ENCODE measurements at regions of chr20 and their contacts with region 1.

Region 1: DNA sequence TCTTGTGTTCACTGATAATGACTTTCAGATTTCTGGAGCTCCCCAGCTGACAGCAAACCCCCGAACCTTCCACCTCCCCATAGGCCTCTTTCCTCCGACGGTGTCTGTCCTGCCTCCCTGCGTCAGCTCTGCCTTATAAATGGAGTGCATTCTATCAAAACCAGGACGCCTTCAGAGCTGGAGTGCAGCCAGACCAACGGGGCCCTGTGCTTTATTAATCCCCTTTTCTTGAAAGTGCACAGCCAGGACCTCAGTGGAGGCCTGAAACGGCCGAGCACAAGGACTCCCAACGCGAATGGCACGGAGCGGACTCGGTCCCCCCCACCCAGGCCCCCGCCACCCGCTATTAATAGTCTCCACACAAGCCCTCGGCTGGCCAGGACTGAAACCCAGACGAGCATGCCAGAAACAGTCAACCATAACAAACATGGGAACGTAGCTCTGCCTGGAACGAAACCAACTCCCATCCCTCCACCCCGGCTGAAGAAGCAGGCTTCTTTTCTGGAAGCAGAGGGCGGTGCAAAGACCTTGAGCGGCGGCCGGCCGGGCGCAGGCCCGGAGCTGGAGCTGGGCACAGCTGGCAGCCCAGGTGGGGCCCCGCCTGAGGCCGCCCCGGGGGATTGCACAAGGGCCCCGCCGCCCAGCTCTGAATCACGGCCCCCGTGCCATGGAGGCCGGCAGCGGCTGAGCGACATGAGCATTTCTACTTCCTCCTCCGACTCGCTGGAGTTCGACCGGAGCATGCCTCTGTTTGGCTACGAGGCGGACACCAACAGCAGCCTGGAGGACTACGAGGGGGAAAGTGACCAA is 42.3 kb upstream of the NAA20 start:
- DNase-seq: peak; percentile 85 to 93 (median 92)
- ATAC-seq: peak; percentile 88 to 90
- H3K4me3 ChIP-seq: peak overlapping the region; percentile 40
- H3K27ac ChIP-seq: peak overlapping the region; percentile 95
- H3K4me1 ChIP-seq: peaks cover 12% of the 10 kb centered on the region
- H3K27me3 ChIP-seq: no peaks in the 10 kb centered on the region

Region 2: GRCh38 chr20:19784511-19785172 is 190.2 kb before region 1 on chr20:
- intact Hi-C with region 1: loop called in 1 of 4 experiments (anchors 10 kb)
- DNase-seq: peak; percentile 44 to 75 (median 64)
- ATAC-seq: peak; percentile 76 to 81
- H3K4me3 ChIP-seq: no peak overlapping the region
- H3K27ac ChIP-seq: peak overlapping the region; percentile 91
- H3K4me1 ChIP-seq: peaks cover 16% of the 10 kb centered on the region
- H3K27me3 ChIP-seq: no peaks in the 10 kb centered on the region

Region 3: DNA sequence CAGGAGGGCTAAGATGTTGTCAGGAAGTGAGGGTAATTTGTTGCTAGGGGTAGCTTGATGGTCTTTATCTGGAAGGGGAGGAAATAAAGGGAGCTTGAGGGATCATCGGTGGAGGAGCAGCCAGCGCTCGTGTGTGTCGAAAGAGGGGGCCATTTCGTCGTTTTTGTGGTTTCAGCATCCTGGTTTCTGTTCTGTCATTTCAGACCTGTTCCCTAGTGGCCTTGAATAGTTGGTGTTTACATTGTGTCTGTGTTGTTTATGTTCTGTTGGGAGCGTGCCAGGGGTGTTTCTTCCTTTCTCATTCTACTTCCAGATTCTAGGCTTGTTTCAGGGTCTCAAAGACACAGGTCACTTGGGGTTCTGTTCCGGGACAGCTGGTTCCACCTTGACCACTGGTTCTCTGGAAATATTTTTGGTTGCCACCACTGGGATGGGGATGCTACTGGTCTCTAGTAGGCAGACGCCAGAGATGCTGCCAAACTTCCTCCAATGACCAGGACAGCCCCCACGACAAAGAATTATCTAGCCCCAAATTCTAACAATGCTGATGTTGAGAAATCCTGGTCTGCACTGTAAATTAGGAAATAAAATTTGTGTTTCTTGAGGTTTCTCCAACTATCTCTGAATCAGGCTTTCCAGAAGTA is 71.5 kb before region 1 on chr20:
- intact Hi-C with region 1: no loop called
- DNase-seq: peak; percentile 26 to 78 (median 65)
- ATAC-seq: peak; percentile 19 to 27
- H3K4me3 ChIP-seq: no peak overlapping the region
- H3K27ac ChIP-seq: peak overlapping the region; percentile 24
- H3K4me1 ChIP-seq: peaks cover 19% of the 10 kb centered on the region
- H3K27me3 ChIP-seq: no peaks in the 10 kb centered on the region

Measured in right cardiac atrium (tissue), 5 donors.